ENCODE measurements at regions of chr2 and their contacts with region 1.

Region 1: GRCh38 chr2:112121682-112122254 is 16.4 kb upstream of the FBLN7 start:
- DNase-seq: no peak

Region 2: GRCh38 chr2:112433932-112434730 is 312.4 kb after region 1 on chr2:
- intact Hi-C with region 1: loop called (anchors 5 kb)
- DNase-seq: no peak